CD4-positive, alpha-beta memory T cell (primary cell): ENCODE measurements at regions of chr17 and their contacts with region 1.

Region 1: GRCh38 chr17:48647103-48647962 is 21.2 kb upstream of the HOXB9 start:
- DNase-seq: no peak
- H3K4me3 ChIP-seq: peak overlapping the region; percentile 46 to 59
- H3K4me3 Mint-ChIP-seq: peak overlapping the region; percentile 82 to 96 (median 90)
- H3K27ac ChIP-seq: no peak overlapping the region
- H3K27ac Mint-ChIP-seq: peak overlapping the region in 3 of 7 donors; percentile 57 to 68 (median 58)
- H3K4me1 ChIP-seq: peaks cover 14% of the 10 kb centered on the region
- H3K4me1 Mint-ChIP-seq: peaks cover 4 to 27% (median 12%) of the 10 kb centered on the region in 4 donors
- H3K27me3 ChIP-seq: peaks cover 26% of the 10 kb centered on the region
- H3K27me3 Mint-ChIP-seq: peaks cover 42 to 49% of the 10 kb centered on the region in 2 donors

Region 2: GRCh38 chr17:48636177-48637018 is 10.9 kb before region 1 on chr17:
- CTCF ChIA-PET with region 1: interaction called, 21 read pairs
- POLR2A ChIA-PET with region 1: interaction called, 3 read pairs
- intact Hi-C with region 1: no loop called
- DNase-seq: peak in 3 of 5 donors; percentile 45 to 65 (median 60)
- H3K4me3 ChIP-seq: no peak overlapping the region
- H3K4me3 Mint-ChIP-seq: peak overlapping the region in 5 of 8 donors; percentile 6 to 46 (median 29)
- H3K27ac ChIP-seq: no peak overlapping the region
- H3K27ac Mint-ChIP-seq: peak overlapping the region in 1 of 7 donors; percentile 55
- H3K4me1 ChIP-seq: peaks cover 15% of the 10 kb centered on the region
- H3K4me1 Mint-ChIP-seq: peaks cover 1 to 19% (median 11%) of the 10 kb centered on the region in 4 donors
- H3K27me3 ChIP-seq: peaks cover 64% of the 10 kb centered on the region
- H3K27me3 Mint-ChIP-seq: peaks cover 64 to 78% of the 10 kb centered on the region in 2 donors

Region 3: GRCh38 chr17:48671697-48672171 is 24.4 kb after region 1 on chr17:
- CTCF ChIA-PET with region 1: no interaction called
- POLR2A ChIA-PET with region 1: no interaction called
- intact Hi-C with region 1: no loop called
- DNase-seq: peak; percentile 56 to 66 (median 60)
- H3K4me3 ChIP-seq: no peak overlapping the region
- H3K4me3 Mint-ChIP-seq: peak overlapping the region in 7 of 8 donors; percentile 17 to 78 (median 39)
- H3K27ac ChIP-seq: no peak overlapping the region
- H3K27ac Mint-ChIP-seq: no peak overlapping the region
- H3K4me1 ChIP-seq: no peaks in the 10 kb centered on the region
- H3K4me1 Mint-ChIP-seq: peaks cover 0 to 6% (median 3%) of the 10 kb centered on the region in 4 donors
- H3K27me3 ChIP-seq: no peaks in the 10 kb centered on the region
- H3K27me3 Mint-ChIP-seq: peaks cover 23 to 33% of the 10 kb centered on the region in 2 donors